Activated CD4-positive, alpha-beta memory T cell treated with anti-CD3 and anti-CD28 coated beads, Interleukin-2, amount 10 ng/mL, durations not matched to agents 7 days and 5 days (primary cell): ENCODE measurements at regions of chr19 and their contacts with region 1.

Region 1: DNA sequence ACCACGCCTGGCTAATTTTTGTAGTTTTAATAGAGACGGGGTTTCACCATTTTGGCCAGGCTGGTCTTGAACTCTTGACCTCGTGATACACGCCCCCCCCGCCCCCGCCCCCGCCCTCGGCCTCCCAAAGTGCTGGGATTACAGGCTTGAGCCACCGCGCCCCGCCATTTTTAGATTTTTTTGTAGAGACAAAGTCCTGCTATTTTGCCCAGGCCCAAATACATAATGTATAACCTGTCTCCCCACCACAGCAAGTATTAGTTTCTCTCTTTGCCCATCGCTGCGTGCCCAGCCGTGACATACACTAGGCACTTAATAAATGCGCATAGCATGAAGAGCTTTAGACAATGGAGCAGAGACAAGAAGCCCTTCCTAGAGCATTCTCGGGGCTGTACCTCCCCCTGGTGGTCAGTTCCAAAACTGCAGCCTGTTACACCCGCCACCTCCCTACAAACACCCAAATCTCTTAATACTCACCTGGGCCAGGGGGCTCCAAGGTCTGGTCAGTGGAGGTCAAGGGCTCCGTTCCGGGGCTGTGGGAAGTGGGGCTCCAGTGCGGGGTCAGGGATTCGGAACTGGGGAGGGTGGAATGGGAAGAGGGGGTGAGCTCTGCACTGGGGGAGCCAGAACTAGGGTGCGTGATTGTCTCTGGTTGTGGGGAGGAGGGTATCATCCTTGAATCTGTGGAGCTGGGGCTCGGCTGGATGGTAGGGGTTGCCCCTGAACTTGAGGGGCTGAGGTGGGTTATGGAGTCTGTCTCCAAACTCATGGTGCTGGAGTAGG is 22.5 kb downstream of the IQCN start:
- DNase-seq: peak; percentile 84
- H3K4me3 Mint-ChIP-seq: no peak overlapping the region
- H3K27ac Mint-ChIP-seq: no peak overlapping the region
- H3K4me1 Mint-ChIP-seq: peaks cover 6% of the 10 kb centered on the region
- H3K27me3 Mint-ChIP-seq: peaks cover 31% of the 10 kb centered on the region

Region 2: DNA sequence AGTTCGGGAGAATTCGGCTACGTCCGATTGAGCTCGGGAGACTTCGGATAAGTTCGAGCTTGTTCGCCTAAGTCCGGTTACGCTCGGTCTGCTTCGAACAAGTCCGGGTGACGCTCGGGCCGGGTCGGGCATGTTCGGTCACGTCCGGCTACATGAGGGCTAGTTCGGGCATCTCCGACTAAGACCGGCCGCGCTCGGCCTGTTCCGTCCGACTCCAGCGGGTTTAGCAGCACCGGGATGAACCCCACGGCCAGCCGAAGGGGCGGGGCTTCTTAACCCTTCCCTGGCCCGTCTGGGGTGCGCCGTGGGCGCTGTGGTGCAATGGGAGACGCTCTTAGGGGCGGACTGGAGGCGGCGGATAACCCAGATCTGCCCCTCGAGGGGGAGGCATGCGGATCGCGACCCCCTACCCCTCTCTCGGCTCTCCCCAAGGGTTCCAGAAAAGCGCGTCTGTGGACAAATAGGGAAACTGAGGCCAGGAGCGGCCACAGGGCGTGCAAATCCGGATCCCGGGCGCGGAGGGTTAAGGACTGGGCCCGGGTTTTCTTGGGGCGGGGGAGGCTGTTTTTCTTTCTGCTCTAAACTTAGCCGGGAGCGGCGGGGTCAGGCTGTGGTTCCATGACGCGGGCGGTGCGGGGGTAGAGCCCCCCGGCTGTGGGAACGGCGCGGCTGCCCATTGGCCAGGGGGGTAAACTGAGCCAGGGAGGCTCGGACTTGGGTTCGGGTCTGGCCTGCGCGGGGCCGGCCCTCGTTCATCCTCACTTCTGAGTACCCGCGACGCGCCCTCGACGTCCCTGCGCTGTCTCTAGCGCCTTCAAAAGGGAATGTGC is 27.0 kb before region 1 on chr19:
- CTCF ChIA-PET with region 1: interaction called, 16 read pairs
- POLR2A ChIA-PET with region 1: no interaction called
- DNase-seq: peak; percentile 93
- H3K4me3 Mint-ChIP-seq: peak overlapping the region; percentile 75
- H3K27ac Mint-ChIP-seq: peak overlapping the region; percentile 47
- H3K4me1 Mint-ChIP-seq: peaks cover 18% of the 10 kb centered on the region
- H3K27me3 Mint-ChIP-seq: peaks cover 51% of the 10 kb centered on the region

Region 3: GRCh38 chr19:18233224-18233825 is 18.5 kb before region 1 on chr19:
- CTCF ChIA-PET with region 1: interaction called, 22 read pairs
- POLR2A ChIA-PET with region 1: no interaction called
- DNase-seq: peak; percentile 66
- H3K4me3 Mint-ChIP-seq: no peak overlapping the region
- H3K27ac Mint-ChIP-seq: no peak overlapping the region
- H3K4me1 Mint-ChIP-seq: peaks cover 4% of the 10 kb centered on the region
- H3K27me3 Mint-ChIP-seq: peaks cover 36% of the 10 kb centered on the region

Region 4: GRCh38 chr19:18340190-18340989 is 88.6 kb after region 1 on chr19 and contains the start of gene PGPEP1:
- CTCF ChIA-PET with region 1: no interaction called
- POLR2A ChIA-PET with region 1: no interaction called
- DNase-seq: peak; percentile 68
- H3K4me3 Mint-ChIP-seq: peak within 1 kb of the TSS; percentile 83
- H3K27ac Mint-ChIP-seq: peak within 1 kb of the TSS; percentile 84
- H3K4me1 Mint-ChIP-seq: peaks cover 23% of the 10 kb centered on the region
- H3K27me3 Mint-ChIP-seq: peaks cover 1% of the 10 kb centered on the region
- total RNA-seq, gene PGPEP1: 42.7 to 44.0 TPM

Region 5: DNA sequence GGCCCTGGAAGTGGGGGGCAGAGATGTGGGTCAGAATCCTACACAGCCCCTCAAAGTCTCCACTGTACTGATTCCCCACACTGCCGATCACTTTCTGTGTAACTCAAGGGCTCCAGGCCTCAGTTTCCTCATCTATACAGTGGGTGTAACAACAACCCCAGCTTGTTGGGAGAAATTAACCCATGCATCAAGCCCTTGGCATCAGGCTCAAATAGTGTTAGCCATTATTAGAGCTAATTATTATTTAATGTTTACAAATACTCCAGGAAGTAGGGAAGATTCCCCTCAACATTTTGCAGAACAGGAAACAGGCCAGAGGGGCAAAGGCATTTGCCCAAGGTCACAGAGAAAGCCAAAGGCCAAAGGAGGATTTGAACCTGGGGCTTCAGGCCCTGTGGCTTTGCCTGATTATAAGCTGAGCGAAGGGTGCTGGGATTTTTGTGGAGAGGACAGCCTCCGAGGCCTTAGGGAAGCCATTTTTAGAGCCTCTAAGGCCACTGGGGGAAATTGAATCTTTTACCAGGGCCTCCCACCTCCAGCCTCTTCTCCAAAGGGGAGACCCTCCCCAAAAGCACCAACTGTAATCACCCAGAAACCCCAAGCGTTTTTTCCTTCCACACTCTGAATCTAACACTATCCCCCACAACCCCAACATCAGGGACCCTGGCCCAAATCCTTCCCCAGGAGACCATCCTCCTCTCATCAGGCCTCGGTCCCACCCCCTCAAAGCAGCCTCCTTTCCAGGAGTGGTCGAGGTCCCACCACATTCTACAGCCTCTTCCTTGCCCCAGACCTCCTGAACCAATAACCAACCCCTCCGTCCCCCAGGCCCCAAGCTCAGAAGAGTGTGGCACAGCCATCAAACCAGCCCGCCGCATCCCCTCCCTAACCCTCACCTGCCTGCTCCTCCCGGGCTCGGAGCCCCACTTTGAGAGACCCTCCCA is 290.5 kb after region 1 on chr19:
- CTCF ChIA-PET with region 1: no interaction called
- POLR2A ChIA-PET with region 1: no interaction called
- DNase-seq: peak; percentile 19
- H3K4me3 Mint-ChIP-seq: peak overlapping the region; percentile 86
- H3K27ac Mint-ChIP-seq: peak overlapping the region; percentile 84
- H3K4me1 Mint-ChIP-seq: peaks cover 31% of the 10 kb centered on the region
- H3K27me3 Mint-ChIP-seq: no peaks in the 10 kb centered on the region